ENCODE measurements at regions of chr6 and their contacts with region 1.

Region 1: DNA sequence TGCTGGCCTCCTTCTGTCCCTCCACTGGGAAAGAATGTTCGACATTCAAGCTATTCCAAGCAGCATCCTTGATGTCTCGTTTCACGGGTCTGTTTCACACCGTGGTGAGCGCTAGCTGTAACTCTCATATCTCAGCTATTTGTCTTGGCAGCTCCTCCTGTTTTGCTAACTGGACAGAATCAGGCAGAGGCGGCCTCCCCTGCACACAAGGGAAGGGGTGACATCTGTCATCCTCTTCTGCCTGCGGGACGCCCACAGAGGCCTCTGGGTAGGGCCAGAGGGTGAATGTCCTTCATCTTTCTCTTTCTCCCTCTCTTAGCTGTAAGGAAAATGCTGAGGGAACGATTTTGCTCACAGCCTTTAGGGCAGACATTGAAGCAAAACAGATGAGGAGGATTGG is 232.8 kb upstream of the GMDS start:
- DNase-seq: no peak
- ATAC-seq: no peak

Region 2: GRCh38 chr6:2545383-2546038 is 67.3 kb after region 1 on chr6:
- intact Hi-C with region 1: loop called (anchors 2 kb)
- DNase-seq: no peak
- ATAC-seq: no peak

Region 3: DNA sequence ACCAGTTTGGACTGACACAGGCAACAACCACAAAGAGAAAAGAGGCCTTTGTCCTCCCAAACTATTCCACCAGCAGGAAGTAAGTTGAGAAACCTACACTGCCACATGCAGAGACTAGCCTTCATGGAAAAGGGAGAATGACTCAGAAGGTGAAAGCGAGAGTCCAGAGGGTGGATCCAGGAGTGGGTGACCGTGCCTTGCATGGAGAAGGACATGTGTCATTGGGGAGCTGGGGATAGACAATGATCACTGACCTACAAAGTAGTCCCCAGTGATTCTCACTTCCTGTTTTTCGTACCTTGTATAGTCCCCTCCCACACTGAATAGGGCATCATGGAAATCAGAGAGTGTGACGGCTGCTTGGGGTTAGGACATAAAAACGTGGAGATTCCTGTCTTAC is 180.6 kb after region 1 on chr6:
- intact Hi-C with region 1: no loop called
- DNase-seq: no peak
- ATAC-seq: no peak

Region 4: GRCh38 chr6:3363296-3364025 is 885.3 kb after region 1 on chr6:
- intact Hi-C with region 1: no loop called
- DNase-seq: no peak
- ATAC-seq: no peak

Measured in sciatic nerve (tissue), 2 donors.